Activated CD4-positive, alpha-beta T cell treated with anti-CD3 and anti-CD28 coated beads, Interleukin-2, amount 10 ng/mL, durations not matched to agents 24 days and 14 days (primary cell): ENCODE measurements at regions of chr4 and their contacts with region 1.

Region 1: DNA sequence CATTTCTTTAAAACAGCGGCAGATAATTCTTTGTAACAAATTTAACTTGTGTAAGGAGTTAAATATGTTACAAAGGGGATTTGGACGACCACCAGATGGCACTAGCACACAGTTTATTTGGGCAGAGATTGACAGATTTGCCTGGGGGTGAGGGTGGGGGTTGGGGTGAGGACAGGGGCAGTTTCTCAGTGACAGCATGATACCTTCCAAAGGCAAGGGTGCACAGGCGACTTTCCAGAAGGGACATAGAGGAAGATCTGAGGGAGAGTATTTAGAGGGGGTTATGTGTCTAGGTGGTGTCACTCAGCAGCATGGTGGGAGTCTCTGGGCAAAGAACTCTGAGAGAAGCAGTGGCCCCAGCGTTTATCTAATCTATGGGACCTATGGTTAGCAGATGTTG is 9.6 kb upstream of the TMA16 start:
- DNase-seq: peak; percentile 87
- H3K4me3 Mint-ChIP-seq: no peak overlapping the region
- H3K27ac Mint-ChIP-seq: no peak overlapping the region
- H3K4me1 Mint-ChIP-seq: peaks cover 4% of the 10 kb centered on the region
- H3K27me3 Mint-ChIP-seq: peaks cover 28% of the 10 kb centered on the region

Region 2: DNA sequence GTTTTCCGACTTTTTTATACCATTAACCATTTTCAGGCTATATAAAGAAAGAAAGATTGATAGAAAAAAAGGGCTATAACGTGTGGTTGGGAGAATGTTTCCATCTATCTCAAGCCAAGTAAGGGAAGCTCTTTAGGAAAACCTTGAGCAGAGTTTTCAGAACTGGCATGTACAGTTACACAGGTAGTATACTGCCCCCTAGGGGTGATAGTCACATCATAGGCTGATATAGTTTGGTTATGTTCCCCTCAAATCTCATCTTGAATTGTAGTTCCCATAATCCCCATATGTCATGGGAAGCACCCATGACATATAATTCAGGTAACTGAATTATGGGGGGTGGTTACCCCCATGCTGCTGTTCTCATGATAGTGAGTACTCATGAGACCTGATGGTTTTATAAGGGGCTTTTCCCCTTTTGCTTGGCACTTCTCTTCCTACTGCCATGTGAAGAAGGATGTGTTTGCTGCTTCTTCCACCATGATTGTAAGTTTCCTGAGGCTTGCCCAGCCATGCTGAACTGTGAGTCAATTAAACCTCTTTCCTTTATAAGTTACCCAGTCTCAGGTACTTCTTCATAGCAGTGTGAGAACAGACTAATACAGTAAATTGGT is 196.4 kb after region 1 on chr4:
- intact Hi-C with region 1: loop called (anchors 1 kb)
- DNase-seq: peak; percentile 79
- H3K4me3 Mint-ChIP-seq: no peak overlapping the region
- H3K27ac Mint-ChIP-seq: no peak overlapping the region
- H3K4me1 Mint-ChIP-seq: no peaks in the 10 kb centered on the region
- H3K27me3 Mint-ChIP-seq: no peaks in the 10 kb centered on the region